ENCODE measurements at regions of chr7 and their contacts with region 1.

Region 1: GRCh38 chr7:12638851-12639467 is 48.5 kb upstream of the ARL4A start:
- DNase-seq: no peak
- H3K4me3 Mint-ChIP-seq: no peak overlapping the region
- H3K27ac Mint-ChIP-seq: no peak overlapping the region
- H3K4me1 Mint-ChIP-seq: peaks cover 18% of the 10 kb centered on the region
- H3K27me3 Mint-ChIP-seq: no peaks in the 10 kb centered on the region

Region 2: GRCh38 chr7:12623897-12624498 is 15.0 kb before region 1 on chr7:
- CTCF ChIA-PET with region 1: interaction called, 11 read pairs
- POLR2A ChIA-PET with region 1: no interaction called
- intact Hi-C with region 1: no loop called
- DNase-seq: no peak
- H3K4me3 Mint-ChIP-seq: no peak overlapping the region
- H3K27ac Mint-ChIP-seq: no peak overlapping the region
- H3K4me1 Mint-ChIP-seq: no peaks in the 10 kb centered on the region
- H3K27me3 Mint-ChIP-seq: peaks cover 20% of the 10 kb centered on the region

Region 3: DNA sequence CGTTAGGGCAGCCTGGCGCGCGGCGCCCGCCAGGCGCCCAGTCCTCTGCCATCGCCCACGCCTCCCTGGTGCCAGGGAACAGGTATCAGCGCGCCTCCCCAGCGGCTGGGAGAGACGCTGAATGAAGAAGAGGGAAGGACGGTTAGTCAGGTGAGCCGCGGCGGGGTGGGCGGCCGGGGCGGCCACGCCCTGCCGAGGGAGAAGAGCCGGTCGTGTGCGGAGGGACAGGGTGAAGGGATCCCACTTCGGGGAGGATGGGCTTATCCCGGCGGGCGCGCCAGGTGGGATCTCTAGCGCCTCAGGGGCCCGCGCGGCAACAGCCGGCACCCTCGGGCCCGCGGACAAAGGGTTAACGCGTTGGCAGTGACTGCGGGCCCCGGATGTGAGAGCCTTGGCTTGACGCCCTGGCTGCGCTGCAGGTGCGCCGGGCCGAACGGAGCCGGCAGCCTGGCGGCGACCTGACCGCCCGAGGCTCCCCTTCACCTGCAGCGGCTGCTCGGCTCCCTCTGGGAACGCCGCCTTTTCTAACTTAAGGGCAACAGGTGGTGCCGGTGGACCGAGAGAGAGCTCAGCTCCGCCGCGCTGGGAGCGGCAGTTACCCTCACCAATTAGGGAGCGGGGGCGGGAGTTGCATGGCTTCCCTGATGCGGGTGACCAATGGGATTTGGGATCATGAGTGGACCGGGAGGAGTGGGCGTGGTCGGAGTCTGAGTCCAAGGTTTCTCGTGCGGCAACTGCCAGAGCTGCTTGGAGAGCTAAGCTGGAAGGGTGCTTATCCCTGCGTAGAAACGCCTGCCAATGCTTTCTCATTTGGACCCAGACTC is 48.1 kb after region 1 on chr7 and contains the start of gene ARL4A:
- CTCF ChIA-PET with region 1: interaction called, 15 read pairs
- POLR2A ChIA-PET with region 1: interaction called, 3 read pairs
- intact Hi-C with region 1: loop called (anchors 1 kb)
- DNase-seq: peak; percentile 95
- H3K4me3 Mint-ChIP-seq: peak within 1 kb of the TSS; percentile 91
- H3K27ac Mint-ChIP-seq: peak within 1 kb of the TSS; percentile 92
- H3K4me1 Mint-ChIP-seq: peaks cover 25% of the 10 kb centered on the region
- H3K27me3 Mint-ChIP-seq: no peaks in the 10 kb centered on the region
- total RNA-seq, gene ARL4A: 11.3 to 12.7 TPM

Region 4: GRCh38 chr7:12741951-12742575 is 103.1 kb after region 1 on chr7:
- CTCF ChIA-PET with region 1: no interaction called
- POLR2A ChIA-PET with region 1: no interaction called
- intact Hi-C with region 1: no loop called
- DNase-seq: no peak
- H3K4me3 Mint-ChIP-seq: no peak overlapping the region
- H3K27ac Mint-ChIP-seq: no peak overlapping the region
- H3K4me1 Mint-ChIP-seq: no peaks in the 10 kb centered on the region
- H3K27me3 Mint-ChIP-seq: no peaks in the 10 kb centered on the region

Region 5: DNA sequence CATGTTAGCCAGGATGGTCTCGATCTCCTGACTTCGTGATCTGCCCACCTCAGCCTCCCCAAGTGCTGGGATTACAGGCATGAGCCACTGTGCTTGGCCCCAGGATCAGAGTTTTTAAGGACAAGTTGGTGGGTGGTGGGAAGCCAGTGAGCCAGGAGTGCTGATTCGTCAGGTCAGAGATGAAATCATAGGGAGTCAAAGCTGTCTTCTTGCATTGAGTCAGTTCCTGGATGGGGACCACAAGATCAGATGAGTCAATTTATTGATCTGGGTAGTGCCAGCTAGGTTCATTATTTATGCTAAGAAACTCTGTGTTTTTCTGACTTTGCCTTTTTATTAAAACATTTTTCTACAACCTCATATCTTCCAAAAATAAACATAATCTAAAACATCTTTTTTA is 472.3 kb after region 1 on chr7:
- CTCF ChIA-PET with region 1: no interaction called
- POLR2A ChIA-PET with region 1: no interaction called
- intact Hi-C with region 1: loop called (anchors 5 kb)
- DNase-seq: peak; percentile 43
- H3K4me3 Mint-ChIP-seq: no peak overlapping the region
- H3K27ac Mint-ChIP-seq: no peak overlapping the region
- H3K4me1 Mint-ChIP-seq: no peaks in the 10 kb centered on the region
- H3K27me3 Mint-ChIP-seq: peaks cover 4% of the 10 kb centered on the region

Region 6: DNA sequence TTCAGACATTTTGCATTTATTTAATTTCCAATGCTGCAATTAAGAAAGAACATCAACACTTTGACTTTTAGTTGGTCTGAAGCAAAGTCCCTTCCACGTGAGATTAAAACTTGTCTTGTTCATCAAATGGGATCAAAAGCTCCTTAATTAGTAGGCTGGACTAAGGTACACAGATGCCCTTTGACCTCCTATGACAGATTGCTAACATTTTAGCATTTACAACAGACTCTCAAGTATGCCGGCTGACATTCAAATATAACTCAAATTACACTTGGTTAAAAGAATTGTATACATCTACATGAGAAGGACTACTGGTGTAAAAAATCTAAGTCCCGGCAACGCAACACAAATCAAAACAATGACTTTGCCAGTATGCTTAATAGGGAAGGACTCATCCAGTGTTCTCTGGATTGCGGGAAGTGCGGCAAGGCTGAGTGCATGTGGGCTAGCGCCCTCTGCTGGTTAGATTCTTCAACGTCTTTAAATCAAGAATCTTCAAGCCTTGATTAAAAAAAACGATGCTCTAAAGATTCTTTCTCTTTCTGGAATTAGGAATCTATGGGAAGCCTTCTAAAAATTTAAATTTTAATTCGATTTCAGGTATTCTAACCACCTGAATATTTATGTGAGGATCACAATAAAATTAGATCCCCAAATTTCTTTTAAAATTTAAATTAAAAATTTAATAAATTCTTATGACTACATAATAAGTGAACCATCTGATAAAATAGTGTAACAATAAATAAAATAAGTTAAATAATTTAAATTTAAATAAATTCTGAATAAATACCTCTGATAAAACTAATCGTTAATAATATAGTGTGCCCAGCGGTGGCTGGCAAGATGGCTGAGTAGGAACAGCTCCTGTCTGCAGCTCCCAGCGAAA is 1818.9 kb after region 1 on chr7:
- CTCF ChIA-PET with region 1: no interaction called
- POLR2A ChIA-PET with region 1: no interaction called
- intact Hi-C with region 1: loop called (anchors 10 kb)
- DNase-seq: peak; percentile 49
- H3K4me3 Mint-ChIP-seq: no peak overlapping the region
- H3K27ac Mint-ChIP-seq: no peak overlapping the region
- H3K4me1 Mint-ChIP-seq: no peaks in the 10 kb centered on the region
- H3K27me3 Mint-ChIP-seq: peaks cover 5% of the 10 kb centered on the region